CD4-positive, alpha-beta T cell (primary cell): ENCODE measurements at regions of chr4 and their contacts with region 1.

Region 1: GRCh38 chr4:166165829-166166420 is 292.9 kb downstream of the TLL1 start:
- DNase-seq: peak in 4 of 14 experiments; percentile 4 to 56 (median 48)
- ATAC-seq: peak; percentile 64
- H3K4me3 ChIP-seq: no peak overlapping the region
- H3K4me3 Mint-ChIP-seq: no peak overlapping the region
- H3K27ac ChIP-seq: no peak overlapping the region
- H3K27ac Mint-ChIP-seq: no peak overlapping the region
- H3K4me1 ChIP-seq: no peaks in the 10 kb centered on the region
- H3K4me1 Mint-ChIP-seq: no peaks in the 10 kb centered on the region
- H3K27me3 ChIP-seq: no peaks in the 10 kb centered on the region
- H3K27me3 Mint-ChIP-seq: no peaks in the 10 kb centered on the region
- CTCF ChIP-seq: peak; percentile 47

Region 2: GRCh38 chr4:168076989-168077725 is 1911.2 kb after region 1 on chr4:
- CTCF ChIA-PET with region 1: no interaction called
- POLR2A ChIA-PET with region 1: no interaction called
- intact Hi-C with region 1: loop called in 1 of 2 experiments (anchors 10 kb)
- DNase-seq: peak in 7 of 14 experiments; percentile 1 to 32 (median 14)
- ATAC-seq: no peak
- H3K4me3 ChIP-seq: no peak overlapping the region
- H3K4me3 Mint-ChIP-seq: no peak overlapping the region
- H3K27ac ChIP-seq: no peak overlapping the region
- H3K27ac Mint-ChIP-seq: no peak overlapping the region
- H3K4me1 ChIP-seq: no peaks in the 10 kb centered on the region
- H3K4me1 Mint-ChIP-seq: no peaks in the 10 kb centered on the region
- H3K27me3 ChIP-seq: no peaks in the 10 kb centered on the region
- H3K27me3 Mint-ChIP-seq: peaks cover 4% of the 10 kb centered on the region
- CTCF ChIP-seq: peak; percentile 59

Region 3: GRCh38 chr4:168153596-168154440 is 1987.9 kb after region 1 on chr4:
- CTCF ChIA-PET with region 1: no interaction called
- POLR2A ChIA-PET with region 1: no interaction called
- intact Hi-C with region 1: loop called in 1 of 2 experiments (anchors 10 kb)
- DNase-seq: peak; percentile 28 to 72 (median 55)
- ATAC-seq: peak; percentile 49
- H3K4me3 ChIP-seq: no peak overlapping the region
- H3K4me3 Mint-ChIP-seq: no peak overlapping the region
- H3K27ac ChIP-seq: no peak overlapping the region
- H3K27ac Mint-ChIP-seq: no peak overlapping the region
- H3K4me1 ChIP-seq: no peaks in the 10 kb centered on the region
- H3K4me1 Mint-ChIP-seq: peaks cover 9% of the 10 kb centered on the region
- H3K27me3 ChIP-seq: no peaks in the 10 kb centered on the region
- H3K27me3 Mint-ChIP-seq: no peaks in the 10 kb centered on the region
- CTCF ChIP-seq: peak; percentile 81